ENCODE measurements at regions of chr6 and their contacts with region 1.

Region 1: DNA sequence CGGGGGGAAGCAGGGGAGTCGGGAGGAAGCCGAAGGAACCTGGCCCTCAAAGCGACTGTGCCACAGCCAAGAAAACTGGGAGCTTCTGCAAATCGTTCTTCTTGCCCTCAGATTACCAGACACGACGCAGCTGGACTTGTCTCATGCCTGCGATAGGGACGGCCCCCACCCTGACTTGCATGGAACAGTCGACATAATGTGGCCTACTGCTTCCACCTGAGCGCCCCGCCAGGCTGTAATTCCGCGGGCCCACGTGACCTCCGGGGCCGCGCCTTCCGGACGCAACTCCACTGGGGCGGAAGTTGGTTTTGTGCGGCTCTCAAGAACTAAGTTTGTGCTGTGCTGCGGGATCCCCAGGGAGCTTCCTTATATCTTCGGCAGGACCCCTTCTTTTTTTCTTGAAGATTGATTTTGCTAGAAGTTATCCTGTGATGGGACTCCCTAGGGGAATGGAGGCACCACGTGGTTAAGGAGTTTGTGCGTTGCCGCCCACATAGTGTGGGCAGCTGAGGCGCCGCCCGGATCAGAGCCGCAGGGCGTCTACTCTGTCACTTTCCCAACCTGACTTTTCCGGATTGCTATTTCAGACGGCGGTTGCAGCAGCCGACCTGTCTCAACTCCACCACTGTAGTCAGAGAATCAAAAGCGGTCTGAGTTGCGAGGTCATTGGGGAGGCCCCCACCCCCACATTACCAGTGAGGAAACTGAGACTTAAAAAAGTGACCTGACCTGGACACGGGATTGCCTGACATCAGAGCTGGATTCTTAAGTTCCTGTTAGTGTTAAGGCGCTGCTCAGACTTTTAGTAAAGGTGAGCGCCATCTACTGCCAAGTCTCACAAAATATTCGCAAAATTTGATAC is 540 bp upstream of the CD164 start:
- DNase-seq: peak; percentile 96 to 97
- ATAC-seq: peak; percentile 96
- H3K4me3 ChIP-seq: peak overlapping the region; percentile 57 to 88
- H3K27ac ChIP-seq: peak overlapping the region; percentile 62 to 98
- H3K4me1 ChIP-seq: peaks cover 0 to under 1% of the 10 kb centered on the region in 2 donors
- H3K27me3 ChIP-seq: no peaks in the 10 kb centered on the region

Region 2: DNA sequence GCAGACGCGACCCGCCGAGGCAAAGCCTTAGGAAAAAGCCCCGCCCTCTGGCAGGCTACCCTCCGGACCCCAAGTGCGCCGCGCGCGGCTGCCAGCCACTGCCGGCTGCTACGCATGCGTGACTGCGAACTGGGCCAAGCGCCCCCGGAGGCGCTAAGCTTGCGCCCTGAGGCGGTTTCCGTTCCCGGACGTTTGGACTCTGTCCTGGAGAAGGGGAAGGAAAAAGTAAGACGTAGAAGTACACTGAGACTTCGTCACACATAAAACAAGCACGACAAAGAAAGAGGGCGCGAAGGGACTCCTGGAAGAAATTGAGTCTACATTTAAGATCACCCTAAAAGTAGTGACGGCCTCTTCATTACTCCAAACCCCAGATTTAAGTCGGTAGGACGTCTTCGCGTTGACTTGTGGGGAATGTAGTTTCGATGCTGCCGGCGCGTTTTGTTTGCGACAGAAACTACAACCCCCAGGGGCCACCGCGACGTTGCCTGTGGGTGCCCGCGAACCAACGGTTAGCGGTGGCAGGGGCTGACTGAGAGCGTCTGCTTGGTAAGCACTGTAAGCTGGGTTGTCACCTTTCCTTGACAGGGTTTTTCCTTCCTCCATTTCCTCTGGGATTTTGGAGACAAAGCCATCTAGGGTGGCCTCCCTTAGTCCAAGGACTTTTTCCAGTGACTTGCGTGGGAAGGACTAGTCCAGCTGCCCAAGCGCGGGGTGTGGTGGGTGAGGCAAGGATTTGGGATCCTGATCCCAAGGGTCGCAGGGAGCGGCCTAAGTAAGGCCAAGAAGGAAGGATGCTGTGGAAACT is 287.6 kb before region 1 on chr6 and contains the start of gene CEP57L1:
- intact Hi-C with region 1: loop called (anchors 5 to 10 kb)
- DNase-seq: peak; percentile 97 to 99
- ATAC-seq: peak; percentile 91
- H3K4me3 ChIP-seq: peak within 1 kb of the TSS; percentile 61 to 93
- H3K27ac ChIP-seq: peak within 1 kb of the TSS; percentile 47 to 84
- H3K4me1 ChIP-seq: peaks cover 2 to 11% of the 10 kb centered on the region in 2 donors
- H3K27me3 ChIP-seq: no peaks in the 10 kb centered on the region
- total RNA-seq, gene CEP57L1: 15.1 to 21.9 TPM

Region 3: GRCh38 chr6:109187399-109188114 is 195.2 kb before region 1 on chr6:
- intact Hi-C with region 1: loop called (anchors 1 kb)
- DNase-seq: peak in 1 of 2 donors; percentile 50
- ATAC-seq: peak; percentile 84
- H3K4me3 ChIP-seq: no peak overlapping the region
- H3K27ac ChIP-seq: no peak overlapping the region
- H3K4me1 ChIP-seq: peaks cover 0 to under 1% of the 10 kb centered on the region in 2 donors
- H3K27me3 ChIP-seq: no peaks in the 10 kb centered on the region

Region 4: DNA sequence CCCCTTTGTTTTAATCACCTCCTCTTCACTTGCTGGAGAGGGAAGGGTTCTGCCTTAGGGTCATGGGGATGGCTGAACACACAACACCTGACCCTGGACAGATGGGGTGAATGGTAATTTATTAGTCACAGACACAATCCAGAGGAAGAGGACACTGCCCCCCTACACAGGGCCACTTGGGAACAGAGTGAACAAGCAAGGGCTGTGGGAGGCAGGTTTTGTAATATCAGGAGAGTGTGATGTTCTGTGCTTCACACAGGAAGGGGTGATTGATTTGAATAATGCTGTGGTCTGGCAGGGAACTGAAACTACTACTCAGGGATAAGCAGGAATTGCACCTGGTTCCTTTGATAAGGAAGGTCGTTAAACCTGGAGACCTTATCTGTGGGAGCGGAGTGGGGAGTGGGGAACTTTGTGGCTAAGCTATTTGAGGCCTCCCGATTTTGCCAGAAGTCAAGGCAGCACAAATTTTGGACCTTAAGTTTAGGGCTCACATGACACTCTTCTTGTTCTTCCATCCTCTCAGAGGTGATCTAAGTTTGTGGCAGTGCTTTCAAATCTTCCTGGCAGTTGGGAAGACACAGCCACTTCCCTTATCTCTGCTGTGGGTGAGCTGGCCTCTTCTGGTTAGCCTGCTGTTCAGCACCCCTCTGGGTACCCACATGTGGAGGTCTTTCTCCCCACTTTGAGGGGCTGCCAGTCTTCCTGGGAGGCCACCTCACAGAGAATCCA is 78.4 kb before region 1 on chr6:
- intact Hi-C with region 1: loop called (anchors 2 kb)
- DNase-seq: no peak
- ATAC-seq: no peak
- H3K4me3 ChIP-seq: no peak overlapping the region
- H3K27ac ChIP-seq: peak overlapping the region in 1 of 2 donors; percentile 38
- H3K4me1 ChIP-seq: peaks cover 0 to 8% of the 10 kb centered on the region in 2 donors
- H3K27me3 ChIP-seq: no peaks in the 10 kb centered on the region

Region 5: DNA sequence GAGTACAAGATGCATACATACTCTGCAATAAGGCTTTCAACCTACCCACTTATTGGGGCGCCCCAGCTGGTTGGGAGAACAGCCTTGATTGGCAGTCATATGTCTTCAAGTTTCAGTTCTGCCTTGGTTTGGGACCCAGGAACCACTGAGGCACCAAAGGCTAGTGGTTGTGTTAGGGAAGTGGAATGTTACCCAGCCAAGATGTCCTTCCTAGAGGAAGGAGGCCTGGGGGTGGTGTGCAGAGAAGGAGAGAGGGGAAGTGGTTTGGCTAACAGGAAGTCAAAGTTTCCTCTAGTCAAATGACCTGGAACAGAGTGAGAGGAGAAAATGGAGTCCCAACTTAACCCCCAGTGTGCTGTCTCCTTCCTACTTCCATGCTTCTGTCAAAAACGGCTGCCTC is 60.0 kb before region 1 on chr6:
- intact Hi-C with region 1: loop called in 1 of 2 experiments (anchors 5 kb)
- DNase-seq: peak in 1 of 2 donors; percentile 70
- ATAC-seq: peak; percentile 59
- H3K4me3 ChIP-seq: no peak overlapping the region
- H3K27ac ChIP-seq: peak overlapping the region; percentile 70 to 71
- H3K4me1 ChIP-seq: peaks cover 0 to 4% of the 10 kb centered on the region in 2 donors
- H3K27me3 ChIP-seq: no peaks in the 10 kb centered on the region

Region 6: DNA sequence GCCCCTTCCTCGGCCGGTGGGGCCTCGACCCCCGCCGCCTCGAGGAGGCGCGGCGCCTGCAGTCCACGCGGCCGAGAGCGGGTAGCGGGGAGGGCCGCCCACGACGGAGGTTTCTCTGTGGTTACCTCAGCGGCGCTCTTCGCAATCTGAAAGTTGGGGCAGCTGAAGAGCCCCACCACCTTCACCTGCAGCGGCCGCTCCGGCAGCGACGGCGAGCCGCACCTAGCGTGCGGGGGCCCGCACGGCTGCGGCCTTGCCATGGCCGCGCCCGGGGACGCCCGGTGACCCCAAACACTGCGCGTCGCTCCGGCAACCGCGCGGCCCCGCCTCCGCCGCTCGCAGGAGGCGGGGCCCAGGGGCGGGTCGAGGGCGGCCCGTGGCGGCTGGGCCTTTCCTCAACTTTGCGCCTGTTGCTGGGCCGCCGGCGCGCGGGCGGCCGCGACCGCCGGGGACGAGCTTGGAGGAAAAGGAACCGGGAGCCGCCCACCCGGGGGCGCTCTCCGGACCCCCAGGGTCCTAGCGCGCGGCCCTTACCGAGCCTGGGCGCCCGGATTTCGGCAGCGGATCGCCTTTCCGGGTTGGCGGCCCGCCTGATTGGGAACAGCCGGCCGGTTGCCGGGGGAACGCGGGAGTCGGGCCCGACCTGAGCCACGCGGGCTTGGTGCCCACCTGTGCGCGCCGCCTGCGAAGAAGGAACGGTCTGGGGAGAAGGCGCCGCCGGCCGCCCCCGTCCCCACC is 57.7 kb after region 1 on chr6 and contains the starts of genes PPIL6 and SMPD2:
- intact Hi-C with region 1: loop called (anchors 2 kb)
- DNase-seq: peak; percentile 94 to 96
- ATAC-seq: peak; percentile 96
- H3K4me3 ChIP-seq: peak within 1 kb of the TSS; percentile 57 to 63
- H3K27ac ChIP-seq: peak within 1 kb of the TSS in 1 of 2 donors; percentile 35
- H3K4me1 ChIP-seq: no peaks in the 10 kb centered on the region
- H3K27me3 ChIP-seq: no peaks in the 10 kb centered on the region
- total RNA-seq, gene PPIL6: 1.0 to 1.5 TPM
- total RNA-seq, gene SMPD2: 6.6 to 9.5 TPM